ENCODE measurements at regions of chr6 and their contacts with region 1.

Region 1: GRCh38 chr6:147506704-147507114 is 1.8 kb upstream of the SAMD5 start:
- DNase-seq: peak; percentile 82

Region 2: GRCh38 chr6:147547369-147547902 is 40.7 kb after region 1 on chr6:
- intact Hi-C with region 1: loop called (anchors 5 kb)
- DNase-seq: no peak

Region 3: GRCh38 chr6:147651249-147652063 is 144.7 kb after region 1 on chr6:
- intact Hi-C with region 1: loop called (anchors 1 kb)
- DNase-seq: no peak

Region 4: DNA sequence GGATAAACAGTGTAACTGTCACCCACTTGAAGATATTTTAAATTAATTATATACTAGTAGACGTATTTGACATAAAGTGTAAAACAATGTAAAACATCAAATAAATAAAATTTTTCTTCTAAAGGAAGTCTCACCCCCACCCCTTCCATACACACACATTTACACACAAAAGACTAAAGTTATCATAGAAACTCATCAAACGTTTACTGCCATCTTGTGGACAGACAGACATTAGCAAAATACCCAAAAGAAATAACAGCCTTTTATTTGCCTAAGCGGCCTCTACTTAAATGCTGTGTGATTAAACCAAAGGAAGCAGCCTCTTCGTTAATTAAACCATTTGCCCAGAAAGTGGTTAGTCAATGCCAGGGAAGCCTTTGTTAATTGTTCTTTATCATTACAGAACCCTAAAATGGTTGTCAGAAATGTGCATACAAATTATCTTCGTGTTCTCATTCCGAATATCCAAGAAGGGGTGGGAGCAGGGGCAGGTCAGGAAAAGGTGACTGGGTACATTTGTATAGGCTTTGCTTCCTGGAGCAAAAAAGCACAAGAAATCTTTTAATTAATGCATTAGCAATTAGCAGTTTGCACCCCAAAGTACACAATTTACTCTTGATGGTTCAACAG is 659.7 kb after region 1 on chr6:
- intact Hi-C with region 1: loop called (anchors 2 kb)
- DNase-seq: no peak

Measured in cardiac septum (tissue), 1 donor.